ENCODE measurements at regions of chr12 and their contacts with region 1.

Region 1: DNA sequence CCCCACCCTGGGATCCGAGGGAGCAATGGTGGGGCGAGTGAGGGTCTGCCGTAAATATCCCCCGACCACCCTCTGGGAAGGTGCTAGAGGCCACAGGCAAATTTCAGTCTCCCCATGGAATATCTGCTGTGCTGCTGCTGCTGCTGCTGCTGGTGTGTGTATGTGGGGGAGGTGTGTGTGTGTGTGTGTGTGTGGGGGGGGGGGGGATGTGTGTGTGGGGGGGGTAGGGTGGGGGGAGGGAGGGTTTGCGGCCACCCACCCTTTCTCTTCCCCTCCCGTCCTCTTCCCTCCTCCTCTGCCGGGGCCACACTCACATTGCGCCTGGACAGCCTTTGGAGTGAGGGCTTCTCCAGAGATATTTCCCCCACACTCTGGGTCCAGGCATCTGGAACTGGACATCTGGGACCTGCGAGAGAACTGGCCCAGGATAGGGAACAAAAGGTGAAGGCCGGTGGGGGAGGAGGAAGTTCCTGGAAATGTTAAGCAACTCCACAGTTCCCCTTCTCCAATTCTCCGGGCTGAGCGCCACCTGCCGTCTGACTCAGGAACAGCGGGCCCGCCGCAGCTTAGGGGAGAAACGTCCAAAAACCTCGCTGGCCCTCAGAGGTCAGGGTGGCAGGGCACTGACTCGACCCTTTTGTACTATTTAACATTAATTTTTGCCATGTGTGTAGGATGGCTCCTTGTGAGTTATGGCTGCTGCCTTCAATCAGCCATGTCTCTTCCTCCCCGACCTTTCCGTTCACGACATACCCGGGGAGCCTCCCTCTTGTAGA is at the start of gene C1RL:
- DNase-seq: no peak
- H3K4me3 ChIP-seq: peak within 1 kb of the TSS; percentile 68
- H3K27me3 ChIP-seq: no peaks in the 10 kb centered on the region
- CTCF ChIP-seq: peak; percentile 98
- polyA plus RNA-seq, gene C1RL: 33.6 and 50.5 TPM in 2 replicates

Region 2: DNA sequence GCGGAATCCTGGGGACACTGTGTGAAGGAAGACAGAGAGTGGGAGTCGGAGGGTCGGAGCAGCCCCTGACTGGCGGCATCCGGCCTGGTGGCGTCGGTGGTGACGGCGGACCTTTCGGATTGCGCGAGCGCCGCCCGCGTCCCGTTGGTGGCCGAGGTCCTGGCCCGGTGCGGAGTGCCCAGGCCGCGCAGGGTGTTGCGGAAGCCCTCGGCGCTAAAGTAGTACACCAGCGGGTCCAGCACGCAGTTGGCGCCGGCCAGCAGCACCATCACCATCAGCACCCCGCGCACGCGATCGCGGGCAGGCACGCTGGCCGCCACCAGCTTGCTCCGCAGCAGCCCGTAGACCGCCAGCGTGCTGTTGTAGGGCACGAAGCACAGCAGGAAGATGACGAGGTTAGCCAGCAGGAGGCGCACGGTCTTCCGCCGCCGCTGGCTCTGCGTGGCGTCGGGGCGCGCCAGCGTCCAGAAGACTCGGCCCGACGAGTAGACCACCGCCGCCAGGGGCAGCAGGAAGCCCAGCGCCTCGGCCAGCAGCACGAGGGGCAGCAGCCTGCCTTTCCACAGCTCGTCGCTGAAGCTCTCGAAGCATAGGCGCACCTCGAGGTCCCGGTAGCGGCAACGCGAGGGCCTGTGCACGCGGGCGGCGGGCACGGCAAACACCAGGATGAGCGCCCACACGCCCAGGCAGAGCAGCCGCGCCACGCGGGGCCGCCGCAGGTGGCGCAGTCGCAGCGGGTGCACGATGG is 488.7 kb before region 1 on chr12:
- CTCF ChIA-PET with region 1: no interaction called
- POLR2A ChIA-PET with region 1: no interaction called
- DNase-seq: no peak
- H3K4me3 ChIP-seq: 0 out of 2 replicates have a peak overlapping the region, but pooled peaks have one; percentile 2
- H3K27me3 ChIP-seq: no peaks in the 10 kb centered on the region
- CTCF ChIP-seq: peak; percentile 61

Region 3: DNA sequence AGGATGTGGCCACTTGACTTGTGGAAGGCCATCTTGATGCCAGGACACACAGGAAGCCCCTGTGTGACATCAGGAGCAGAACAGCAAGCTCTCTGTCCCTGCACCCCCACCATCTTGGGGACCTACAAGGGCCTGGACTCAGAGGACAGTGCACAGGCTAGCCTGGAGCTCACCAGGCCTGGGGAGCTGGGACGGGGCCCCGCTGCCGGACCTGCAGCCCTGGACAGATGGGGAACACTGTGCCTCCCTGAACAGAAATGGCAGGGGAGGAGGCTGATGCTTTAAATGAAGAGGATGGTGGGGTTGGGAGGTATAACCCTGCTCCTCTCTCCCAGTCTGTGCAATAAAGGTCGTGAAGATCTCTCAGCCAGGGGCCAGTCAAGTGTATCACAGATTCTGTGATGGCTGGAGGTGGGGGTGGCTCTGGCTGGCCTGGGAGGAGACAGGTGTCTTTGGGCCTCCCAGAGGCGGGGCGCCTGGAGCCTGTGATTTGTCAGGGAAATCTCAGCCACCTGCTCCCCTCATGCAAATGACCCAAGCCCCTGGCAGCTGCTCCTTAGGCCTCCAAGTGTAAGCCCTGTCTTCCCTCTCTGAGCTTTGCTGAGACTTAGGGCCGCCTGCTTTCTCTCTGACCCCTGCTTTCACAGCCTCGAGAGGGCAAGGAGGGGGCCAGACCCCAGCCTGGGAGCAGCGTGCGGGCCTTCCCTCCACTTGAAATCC is 269.3 kb before region 1 on chr12:
- CTCF ChIA-PET with region 1: no interaction called
- POLR2A ChIA-PET with region 1: no interaction called
- DNase-seq: no peak
- H3K4me3 ChIP-seq: no peak overlapping the region
- H3K27me3 ChIP-seq: no peaks in the 10 kb centered on the region
- CTCF ChIP-seq: no peak

Region 4: DNA sequence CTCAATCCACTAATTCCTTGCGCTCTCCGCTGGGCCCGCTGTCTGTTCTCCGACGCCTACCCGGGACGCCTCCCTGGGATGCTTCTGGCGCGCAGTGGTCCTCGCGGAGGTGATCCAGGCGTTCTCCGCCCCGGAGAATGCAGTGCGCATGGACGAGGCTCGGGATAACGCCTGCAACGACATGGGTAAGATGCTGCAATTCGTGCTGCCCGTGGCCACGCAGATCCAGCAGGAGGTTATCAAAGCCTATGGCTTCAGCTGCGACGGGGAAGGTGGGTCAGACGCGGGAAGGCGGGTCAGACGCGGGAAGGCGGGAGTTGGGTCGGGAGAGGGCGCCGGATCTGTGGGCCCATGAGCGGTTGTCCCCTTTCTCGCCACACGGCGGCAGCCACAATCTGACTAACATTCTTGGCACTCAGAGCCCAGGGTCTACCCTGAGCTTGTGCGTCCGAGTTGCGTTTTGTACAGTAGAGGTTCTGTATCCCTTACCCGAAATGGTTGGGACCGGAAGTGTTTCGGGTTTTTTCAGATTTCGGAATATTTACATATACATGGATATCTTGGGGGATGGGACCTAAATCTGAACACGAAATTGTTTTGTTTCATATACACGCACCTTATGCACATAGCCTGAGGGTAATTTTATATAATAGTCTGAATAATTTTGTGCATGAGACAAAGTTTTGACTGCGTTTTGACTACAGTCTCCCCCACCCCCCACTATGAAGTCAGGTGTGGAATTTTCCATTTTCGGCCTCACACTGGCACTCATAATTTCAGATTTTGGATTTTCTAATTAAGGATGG is 164.4 kb before region 1 on chr12:
- CTCF ChIA-PET with region 1: interaction called, 40 read pairs
- POLR2A ChIA-PET with region 1: no interaction called
- DNase-seq: peak; percentile 57
- H3K4me3 ChIP-seq: peak overlapping the region; percentile 67
- H3K27me3 ChIP-seq: no peaks in the 10 kb centered on the region
- CTCF ChIP-seq: peak; percentile 87

Region 5: GRCh38 chr12:7060353-7060954 is 48.5 kb before region 1 on chr12 and contains the start of gene C1S:
- CTCF ChIA-PET with region 1: interaction called, 151 read pairs
- POLR2A ChIA-PET with region 1: no interaction called
- DNase-seq: peak; percentile 97
- H3K4me3 ChIP-seq: peak within 1 kb of the TSS; percentile 43
- H3K27me3 ChIP-seq: no peaks in the 10 kb centered on the region
- CTCF ChIP-seq: peak; percentile 88
- polyA plus RNA-seq, gene C1S: 329 and 341 TPM in 2 replicates

Region 6: DNA sequence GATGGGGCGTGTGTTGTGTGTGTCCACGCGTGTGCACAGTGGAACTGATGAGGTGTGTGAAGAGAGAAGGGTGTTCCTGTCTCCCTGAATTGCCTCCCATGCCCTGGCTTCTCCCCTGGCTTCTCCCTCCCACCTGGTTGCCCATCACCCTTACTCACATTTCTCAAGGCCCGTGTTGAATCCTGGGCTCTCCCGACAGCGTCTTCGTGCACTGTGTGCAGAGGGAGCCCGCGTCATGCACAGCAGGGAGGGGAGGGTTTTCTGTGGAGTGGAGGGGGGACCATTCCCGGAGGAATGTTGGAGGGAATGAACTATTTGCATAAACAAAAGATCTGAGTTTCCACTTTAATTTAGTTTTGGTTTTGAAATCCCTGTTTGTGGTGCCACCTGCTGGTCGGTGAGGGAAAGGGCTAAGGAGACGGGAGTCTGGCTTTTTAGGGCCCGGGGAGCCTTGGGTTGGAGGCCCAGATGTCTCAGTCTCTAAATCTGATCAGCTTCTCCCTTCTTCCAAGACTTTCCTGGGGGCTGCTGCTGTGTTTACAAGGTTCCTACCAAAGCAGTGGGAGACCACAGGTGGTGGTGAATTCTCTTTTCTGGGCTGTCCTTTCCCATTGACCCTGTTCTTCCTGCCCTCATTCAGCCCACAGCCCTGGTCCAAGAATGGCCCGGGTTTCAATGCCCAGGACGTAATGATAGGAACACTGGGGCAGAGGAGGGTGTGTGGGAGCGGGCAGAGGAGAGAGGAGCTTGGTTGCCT is 16.6 kb before region 1 on chr12 and contains the start of gene C1R:
- CTCF ChIA-PET with region 1: interaction called, 29 read pairs
- POLR2A ChIA-PET with region 1: no interaction called
- DNase-seq: peak; percentile 63
- H3K4me3 ChIP-seq: peak within 1 kb of the TSS; percentile 76
- H3K27me3 ChIP-seq: no peaks in the 10 kb centered on the region
- CTCF ChIP-seq: peak; percentile 87
- polyA plus RNA-seq, gene C1R: 668 and 703 TPM in 2 replicates

Region 7: DNA sequence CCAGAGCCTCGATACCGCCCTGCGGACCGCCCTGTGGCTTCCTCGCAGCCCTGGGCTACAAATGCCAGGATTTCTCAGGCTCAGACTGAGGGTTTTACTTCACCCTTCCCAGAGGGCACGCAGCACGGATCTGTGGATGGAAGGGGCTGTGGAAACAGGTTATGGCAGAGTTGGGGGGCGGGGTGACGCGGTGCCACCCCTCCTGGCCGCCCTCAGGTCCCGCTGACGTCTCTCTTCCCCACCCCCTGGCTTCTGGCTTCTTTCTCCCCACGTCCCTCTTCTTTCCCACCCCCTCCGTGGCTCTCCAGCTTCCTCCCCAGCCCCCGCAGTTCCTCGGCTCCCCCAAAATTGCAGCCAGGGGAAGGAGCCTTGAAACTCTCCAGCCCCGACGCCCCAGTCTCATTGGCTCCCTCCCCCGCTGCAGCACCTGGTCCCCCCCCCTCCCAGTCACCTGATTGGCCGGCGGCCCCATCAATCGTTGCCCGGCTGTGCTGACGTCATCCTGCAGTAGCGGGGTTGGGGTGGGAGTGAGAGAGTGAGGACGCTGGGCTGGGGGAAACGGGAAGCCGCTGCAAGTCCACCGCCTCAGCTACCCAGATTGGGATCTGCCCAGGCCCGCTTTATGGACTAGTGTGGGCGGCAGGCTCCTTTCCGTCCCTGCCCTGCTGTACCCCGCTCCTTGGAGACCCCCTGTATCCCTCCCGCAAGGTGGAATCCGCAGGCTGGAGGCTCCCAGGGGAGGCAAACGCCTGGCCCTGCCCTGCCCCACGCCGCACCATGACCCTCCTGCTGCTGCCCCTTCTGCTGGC is 21.1 kb after region 1 on chr12 and contains the start of gene CLSTN3:
- CTCF ChIA-PET with region 1: interaction called, 13 read pairs
- POLR2A ChIA-PET with region 1: no interaction called
- DNase-seq: no peak
- H3K4me3 ChIP-seq: peak within 1 kb of the TSS; percentile 61
- H3K27me3 ChIP-seq: no peaks in the 10 kb centered on the region
- CTCF ChIP-seq: no peak
- polyA plus RNA-seq, gene CLSTN3: 14.3 and 19.2 TPM in 2 replicates

Region 8: GRCh38 chr12:7180685-7181084 is 71.7 kb after region 1 on chr12:
- CTCF ChIA-PET with region 1: no interaction called
- POLR2A ChIA-PET with region 1: no interaction called
- DNase-seq: no peak
- H3K4me3 ChIP-seq: no peak overlapping the region
- H3K27me3 ChIP-seq: no peaks in the 10 kb centered on the region; the same call in 1 of the 2 replicates
- CTCF ChIP-seq: no peak